ENCODE measurements at regions of chr15 and their contacts with region 1.

Region 1: GRCh38 chr15:74937596-74938296 is at the start of gene COX5A:
- DNase-seq: peak; percentile 92 to 95 (median 93)
- H3K4me3 ChIP-seq: peak within 1 kb of the TSS; percentile 41 to 96
- H3K4me3 Mint-ChIP-seq: peak within 1 kb of the TSS; percentile 88 to 95 (median 94)
- H3K27ac ChIP-seq: peak within 1 kb of the TSS; percentile 79
- H3K27ac Mint-ChIP-seq: peak within 1 kb of the TSS; percentile 88 to 96 (median 92)
- H3K4me1 ChIP-seq: peaks cover 38% of the 10 kb centered on the region
- H3K4me1 Mint-ChIP-seq: peaks cover 21 to 40% (median 28%) of the 10 kb centered on the region in 4 donors
- H3K27me3 ChIP-seq: no peaks in the 10 kb centered on the region
- H3K27me3 Mint-ChIP-seq: no peaks in the 10 kb centered on the region
- total RNA-seq, gene COX5A: 66.8 to 74.4 TPM

Region 2: DNA sequence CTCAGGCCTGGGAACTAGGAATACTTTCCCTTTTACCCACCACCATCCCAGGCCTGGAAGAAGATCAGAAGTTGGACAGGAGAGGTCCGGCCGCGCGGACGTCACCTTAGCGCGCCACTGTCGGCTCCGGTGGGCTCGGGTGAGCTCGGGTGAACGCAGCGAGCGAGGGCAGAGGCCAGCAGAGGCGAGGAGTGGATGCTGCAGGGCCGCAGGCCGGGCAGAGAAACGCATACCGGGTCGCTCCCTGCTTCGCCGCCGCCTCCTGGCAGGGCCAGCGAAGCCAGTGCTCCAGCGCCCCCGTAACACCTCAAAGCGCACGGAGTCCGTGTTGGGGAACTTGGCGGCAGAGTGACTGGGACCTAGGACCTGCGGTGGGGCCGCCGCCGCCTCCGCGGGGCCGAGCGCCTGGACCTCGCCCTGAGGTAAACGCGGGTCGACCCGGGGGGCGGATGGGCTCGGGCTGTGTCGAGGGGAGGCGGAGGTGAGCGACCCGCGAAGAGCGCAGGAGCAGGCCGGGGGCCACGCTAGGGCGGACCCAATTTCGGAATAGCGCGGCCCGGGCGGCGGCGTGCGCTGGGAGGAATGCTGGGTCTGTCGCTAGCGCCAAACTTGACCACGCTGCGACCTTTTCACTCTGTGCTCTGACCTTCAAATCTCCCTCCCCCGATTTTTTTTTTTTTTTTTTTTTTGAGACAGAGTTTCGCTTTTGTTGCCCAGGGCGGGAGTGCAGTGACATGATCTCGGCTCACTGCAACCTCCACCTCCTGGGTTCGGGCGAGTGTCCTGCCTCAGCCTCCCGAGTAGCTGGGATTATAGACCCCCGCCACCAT is 571.9 kb before region 1 on chr15:
- CTCF ChIA-PET with region 1: no interaction called
- POLR2A ChIA-PET with region 1: no interaction called
- intact Hi-C with region 1: no loop called
- DNase-seq: no peak
- H3K4me3 ChIP-seq: no peak overlapping the region
- H3K4me3 Mint-ChIP-seq: peak overlapping the region in 7 of 8 donors; percentile 33 to 64 (median 49)
- H3K27ac ChIP-seq: no peak overlapping the region
- H3K27ac Mint-ChIP-seq: no peak overlapping the region
- H3K4me1 ChIP-seq: peaks cover 5% of the 10 kb centered on the region
- H3K4me1 Mint-ChIP-seq: peaks cover 0 to 4% (median 3%) of the 10 kb centered on the region in 4 donors
- H3K27me3 ChIP-seq: peaks cover 7% of the 10 kb centered on the region
- H3K27me3 Mint-ChIP-seq: peaks cover 29% of the 10 kb centered on the region in 2 donors

Region 3: DNA sequence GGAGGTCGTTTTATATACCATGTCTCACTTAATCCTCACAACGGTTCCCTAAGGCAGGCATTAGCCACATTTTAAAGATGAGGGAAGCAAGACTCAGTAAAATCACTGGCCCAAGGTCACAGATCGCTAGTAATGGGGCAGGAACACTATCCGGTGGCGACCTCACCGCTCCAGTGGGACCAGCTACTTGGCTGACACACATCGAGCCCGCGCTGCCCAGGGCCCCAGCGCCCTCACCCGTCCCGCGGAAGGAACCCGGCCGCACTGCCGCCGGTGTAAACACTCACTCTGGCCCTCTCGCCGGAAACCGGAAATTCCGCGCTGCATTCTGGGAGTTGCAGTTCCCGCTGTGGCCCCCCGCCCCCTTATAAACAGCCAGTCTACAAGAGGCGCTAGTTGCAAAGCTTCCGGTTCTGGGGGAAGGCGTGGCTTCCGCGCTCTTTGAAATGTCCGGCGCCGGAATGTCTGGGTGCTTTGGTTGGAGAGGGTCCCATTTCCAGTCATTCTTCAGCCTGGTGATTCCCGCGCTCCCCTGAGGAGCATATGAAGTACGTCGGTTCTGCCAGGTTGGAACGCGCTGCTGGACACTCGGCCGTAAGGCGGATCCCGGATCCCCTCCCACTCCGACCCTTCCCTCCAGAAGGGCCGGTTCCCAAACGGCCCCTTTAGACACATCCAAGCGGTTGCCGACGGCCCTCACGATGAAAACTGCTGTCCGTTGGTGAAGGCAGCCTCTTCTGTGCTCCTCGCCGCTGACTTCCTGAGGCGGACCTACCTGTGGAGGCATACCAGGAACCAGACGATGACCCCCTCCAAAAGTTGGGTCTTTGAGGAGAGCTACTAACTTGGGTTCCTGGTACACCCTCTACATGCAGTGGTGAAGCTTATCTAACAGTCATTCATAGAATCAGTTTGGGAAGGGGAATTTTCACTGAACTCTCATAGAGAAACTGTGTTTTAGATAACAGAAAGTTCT is 476.6 kb before region 1 on chr15 and contains the start of gene UBL7:
- CTCF ChIA-PET with region 1: no interaction called
- POLR2A ChIA-PET with region 1: interaction called, 3 read pairs
- intact Hi-C with region 1: loop called (anchors 1 kb)
- DNase-seq: peak; percentile 89 to 97 (median 91)
- H3K4me3 ChIP-seq: peak within 1 kb of the TSS; percentile 78 to 100
- H3K4me3 Mint-ChIP-seq: peak within 1 kb of the TSS; percentile 88 to 98 (median 94)
- H3K27ac ChIP-seq: peak within 1 kb of the TSS; percentile 84
- H3K27ac Mint-ChIP-seq: peak within 1 kb of the TSS; percentile 66 to 96 (median 92)
- H3K4me1 ChIP-seq: peaks cover 40% of the 10 kb centered on the region
- H3K4me1 Mint-ChIP-seq: peaks cover 32 to 53% (median 46%) of the 10 kb centered on the region in 4 donors
- H3K27me3 ChIP-seq: no peaks in the 10 kb centered on the region
- H3K27me3 Mint-ChIP-seq: no peaks in the 10 kb centered on the region
- total RNA-seq, gene UBL7: 36.4 to 42.4 TPM

Region 4: DNA sequence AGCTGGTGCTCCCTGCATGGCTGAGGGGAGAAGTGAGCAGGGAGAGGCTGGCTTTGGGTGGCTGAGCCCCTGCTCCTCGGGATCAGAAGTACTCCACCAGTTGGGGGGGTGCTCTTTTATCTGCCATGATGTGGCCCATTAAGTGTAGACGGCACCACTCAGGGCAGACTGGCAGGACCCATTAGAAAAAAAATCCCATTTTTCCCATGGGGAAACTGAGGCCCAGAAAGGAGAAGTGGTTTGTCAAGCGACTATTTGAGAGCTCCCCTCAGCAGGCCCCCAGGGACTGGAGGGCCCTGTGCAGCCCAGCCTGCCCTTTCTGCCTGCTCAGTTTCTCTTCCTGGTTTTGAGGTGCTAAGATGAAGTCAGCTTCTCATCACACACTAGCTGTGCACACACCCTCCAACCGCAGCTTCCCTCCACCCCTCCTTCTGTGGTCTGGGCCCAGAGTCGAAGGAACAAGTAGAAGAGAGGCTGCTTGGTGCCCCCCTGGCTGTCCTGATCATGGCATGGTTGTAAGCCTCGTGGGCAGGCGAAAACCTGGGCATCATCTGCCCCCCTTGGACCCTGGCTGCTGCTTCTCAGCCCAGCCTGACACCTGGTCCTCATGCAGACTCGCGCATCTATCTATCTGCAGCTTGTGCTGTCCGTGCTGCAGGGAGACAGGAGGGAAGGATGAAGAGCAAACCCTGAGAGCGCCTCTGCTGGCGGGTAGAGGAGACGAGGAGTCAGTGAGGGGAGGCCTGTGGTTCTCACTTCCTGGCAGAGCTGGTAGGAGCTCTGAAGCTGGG is 150.3 kb before region 1 on chr15:
- CTCF ChIA-PET with region 1: interaction called, 6 read pairs
- POLR2A ChIA-PET with region 1: interaction called, 8 read pairs
- intact Hi-C with region 1: loop called (anchors 5 kb)
- DNase-seq: peak; percentile 94 to 99 (median 96)
- H3K4me3 ChIP-seq: peak overlapping the region; percentile 55 to 69
- H3K4me3 Mint-ChIP-seq: peak overlapping the region; percentile 85 to 96 (median 92)
- H3K27ac ChIP-seq: peak overlapping the region; percentile 86
- H3K27ac Mint-ChIP-seq: peak overlapping the region; percentile 95 to 99 (median 98)
- H3K4me1 ChIP-seq: peaks cover 89% of the 10 kb centered on the region
- H3K4me1 Mint-ChIP-seq: peaks cover 39 to 97% (median 66%) of the 10 kb centered on the region in 4 donors
- H3K27me3 ChIP-seq: no peaks in the 10 kb centered on the region
- H3K27me3 Mint-ChIP-seq: no peaks in the 10 kb centered on the region

Region 5: DNA sequence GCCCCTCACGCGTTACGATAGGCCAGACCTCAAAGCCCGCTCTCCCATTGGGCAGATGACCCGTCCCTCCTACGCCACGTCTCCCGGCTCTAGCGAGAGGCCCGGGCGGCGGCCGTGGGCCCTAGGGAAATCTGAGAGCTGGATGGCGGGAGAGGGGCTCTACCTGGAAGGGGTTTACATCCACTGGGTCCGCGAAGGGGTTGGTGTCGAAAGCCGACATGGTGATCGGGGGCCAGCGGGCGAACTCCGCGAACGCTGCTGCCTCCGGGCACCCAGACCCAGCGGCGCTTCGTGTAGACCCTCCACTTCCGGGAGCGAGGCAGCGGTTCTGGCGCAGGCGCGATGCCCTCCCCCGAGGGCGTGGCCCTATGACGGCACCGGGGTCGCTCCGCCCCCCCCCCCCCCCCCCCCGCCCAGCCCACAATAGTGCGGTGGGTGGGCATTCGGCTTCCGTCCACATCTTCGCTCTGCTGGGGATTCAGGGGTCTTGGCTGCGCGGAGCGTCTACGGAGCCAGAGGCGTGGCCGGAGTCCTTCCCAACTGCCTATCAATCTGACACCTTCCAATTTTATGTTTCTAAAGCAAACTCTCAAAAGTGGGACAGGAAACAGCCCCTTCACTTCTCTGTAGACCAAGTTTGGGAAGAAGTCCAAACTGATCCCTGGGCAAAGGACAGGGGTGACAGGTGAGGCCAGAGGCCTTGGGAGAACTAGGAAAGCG is 64.5 kb before region 1 on chr15 and contains the start of gene SCAMP2:
- CTCF ChIA-PET with region 1: interaction called, 3 read pairs
- POLR2A ChIA-PET with region 1: interaction called, 7 read pairs
- intact Hi-C with region 1: loop called (anchors 1 kb)
- DNase-seq: peak; percentile 92 to 95 (median 94)
- H3K4me3 ChIP-seq: peak within 1 kb of the TSS; percentile 52 to 99
- H3K4me3 Mint-ChIP-seq: peak within 1 kb of the TSS; percentile 94 to 100 (median 99)
- H3K27ac ChIP-seq: peak within 1 kb of the TSS; percentile 93
- H3K27ac Mint-ChIP-seq: peak within 1 kb of the TSS; percentile 96 to 99 (median 98)
- H3K4me1 ChIP-seq: peaks cover 53% of the 10 kb centered on the region
- H3K4me1 Mint-ChIP-seq: peaks cover 33 to 57% (median 44%) of the 10 kb centered on the region in 4 donors
- H3K27me3 ChIP-seq: no peaks in the 10 kb centered on the region
- H3K27me3 Mint-ChIP-seq: no peaks in the 10 kb centered on the region
- total RNA-seq, gene SCAMP2: 132 to 138 TPM

Region 6: GRCh38 chr15:74950078-74951000 is 12.6 kb after region 1 on chr15:
- CTCF ChIA-PET with region 1: interaction called, 10 read pairs
- POLR2A ChIA-PET with region 1: interaction called, 12 read pairs
- intact Hi-C with region 1: no loop called
- DNase-seq: peak; percentile 70 to 79 (median 75)
- H3K4me3 ChIP-seq: no peak overlapping the region
- H3K4me3 Mint-ChIP-seq: no peak overlapping the region
- H3K27ac ChIP-seq: no peak overlapping the region
- H3K27ac Mint-ChIP-seq: peak overlapping the region in 1 of 7 donors; percentile 1
- H3K4me1 ChIP-seq: peaks cover 6% of the 10 kb centered on the region
- H3K4me1 Mint-ChIP-seq: peaks cover under 1 to 11% (median 3%) of the 10 kb centered on the region in 4 donors
- H3K27me3 ChIP-seq: no peaks in the 10 kb centered on the region
- H3K27me3 Mint-ChIP-seq: peaks cover 2% of the 10 kb centered on the region in 2 donors

Region 7: DNA sequence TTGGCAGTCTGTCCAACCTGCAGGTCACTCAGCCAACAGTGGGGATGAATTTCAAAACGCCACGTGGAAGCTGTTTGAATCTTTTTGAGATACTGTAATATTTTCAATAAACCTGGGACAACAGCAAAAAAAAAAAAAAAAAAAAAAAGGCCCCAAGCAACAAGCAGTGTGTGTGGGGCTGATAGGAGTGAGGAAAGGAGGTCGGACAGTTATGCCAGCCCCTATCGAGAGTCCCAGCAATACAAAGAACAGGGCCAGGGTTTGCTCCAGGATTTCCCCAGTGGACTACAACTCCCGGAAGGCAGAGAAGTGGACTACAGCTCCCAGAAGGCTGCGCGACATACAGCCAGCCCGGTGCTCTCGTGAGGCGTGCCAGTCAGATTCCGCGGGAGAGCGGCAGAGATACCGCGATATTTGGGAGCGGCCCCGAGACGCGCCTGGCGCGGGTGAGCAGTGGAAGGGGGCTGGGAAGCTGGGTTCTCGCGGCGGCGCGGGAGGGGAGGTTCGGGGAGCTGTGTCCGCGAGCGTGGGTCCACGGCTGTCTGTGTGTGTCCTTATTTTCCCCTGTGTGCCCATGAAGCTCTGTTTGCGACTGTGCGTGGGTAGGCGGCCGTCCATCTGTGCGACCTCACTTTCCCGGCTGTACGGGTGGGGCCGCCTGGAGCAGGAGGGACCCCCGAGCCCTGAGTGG is 85.6 kb after region 1 on chr15 and contains the start of gene PPCDC:
- CTCF ChIA-PET with region 1: no interaction called
- POLR2A ChIA-PET with region 1: interaction called, 6 read pairs
- intact Hi-C with region 1: loop called (anchors 1 kb)
- DNase-seq: peak; percentile 91 to 94 (median 92)
- H3K4me3 ChIP-seq: peak within 1 kb of the TSS; percentile 95 to 100
- H3K4me3 Mint-ChIP-seq: peak within 1 kb of the TSS; percentile 92 to 99 (median 96)
- H3K27ac ChIP-seq: peak within 1 kb of the TSS; percentile 76
- H3K27ac Mint-ChIP-seq: peak within 1 kb of the TSS; percentile 71 to 97 (median 93)
- H3K4me1 ChIP-seq: peaks cover 20% of the 10 kb centered on the region
- H3K4me1 Mint-ChIP-seq: peaks cover 11 to 28% (median 18%) of the 10 kb centered on the region in 4 donors
- H3K27me3 ChIP-seq: no peaks in the 10 kb centered on the region
- H3K27me3 Mint-ChIP-seq: no peaks in the 10 kb centered on the region
- total RNA-seq, gene PPCDC: 14.1 to 15.2 TPM

Measured in CD4-positive, alpha-beta memory T cell (primary cell).